Endothelial cell of umbilical vein (primary cell): ENCODE measurements at regions of chr18 and their contacts with region 1.

Region 1: DNA sequence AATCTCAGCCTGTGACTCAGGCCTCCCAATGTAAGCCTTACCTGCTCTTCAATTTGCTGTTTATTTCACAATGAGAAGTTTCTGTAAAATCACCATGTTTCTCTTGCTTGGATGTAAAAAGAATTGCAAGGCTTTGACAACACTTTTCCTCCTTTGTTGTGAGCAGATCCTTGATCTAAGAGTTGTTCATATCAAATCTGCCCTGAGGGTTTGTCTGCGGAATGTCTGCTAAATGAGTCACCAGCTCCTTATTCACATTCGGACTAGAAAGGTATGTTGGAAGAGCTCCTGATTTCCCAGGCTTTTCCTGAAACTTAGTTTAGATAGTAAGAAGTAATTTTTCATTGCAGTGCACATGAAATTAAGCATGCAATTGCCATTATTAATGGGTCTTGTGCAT is 268.2 kb upstream of the TCF4 start:
- DNase-seq: peak; percentile 64
- H3K4me3 ChIP-seq: no peak overlapping the region
- H3K27ac ChIP-seq: no peak overlapping the region
- H3K4me1 ChIP-seq: peaks cover 10% of the 10 kb centered on the region
- H3K27me3 ChIP-seq: no peaks in the 10 kb centered on the region
- CTCF ChIP-seq: no peak
- POLR2A ChIP-seq: no peak

Region 2: DNA sequence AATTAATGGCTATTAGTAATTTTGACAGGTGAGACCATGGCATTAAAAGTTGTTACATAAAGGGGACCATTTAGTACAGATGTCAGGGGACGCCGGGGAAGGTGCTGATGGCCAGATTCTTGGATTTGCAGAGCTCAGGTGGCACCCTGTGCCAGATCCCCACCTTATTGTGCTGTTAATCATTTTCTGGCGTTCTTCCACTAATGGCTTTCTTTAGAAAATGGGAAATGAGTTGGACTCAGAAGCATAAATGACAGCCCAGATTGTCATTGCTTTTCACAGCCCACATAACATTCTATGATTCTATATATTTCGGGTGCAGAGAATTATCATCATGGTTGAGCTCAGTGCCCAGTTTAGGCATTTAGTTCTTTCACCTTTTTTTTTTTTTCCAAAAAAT is 11.0 kb before region 1 on chr18:
- CTCF ChIA-PET with region 1: interaction called, 12 read pairs
- POLR2A ChIA-PET with region 1: no interaction called
- dilution Hi-C with region 1: no loop called
- intact Hi-C with region 1: no loop called
- DNase-seq: no peak
- H3K4me3 ChIP-seq: no peak overlapping the region
- H3K27ac ChIP-seq: no peak overlapping the region
- H3K4me1 ChIP-seq: no peaks in the 10 kb centered on the region
- H3K27me3 ChIP-seq: no peaks in the 10 kb centered on the region
- CTCF ChIP-seq: no peak
- POLR2A ChIP-seq: no peak